Spleen (tissue), 13 donors: ENCODE measurements at regions of chr1 and their contacts with region 1.

Region 1: DNA sequence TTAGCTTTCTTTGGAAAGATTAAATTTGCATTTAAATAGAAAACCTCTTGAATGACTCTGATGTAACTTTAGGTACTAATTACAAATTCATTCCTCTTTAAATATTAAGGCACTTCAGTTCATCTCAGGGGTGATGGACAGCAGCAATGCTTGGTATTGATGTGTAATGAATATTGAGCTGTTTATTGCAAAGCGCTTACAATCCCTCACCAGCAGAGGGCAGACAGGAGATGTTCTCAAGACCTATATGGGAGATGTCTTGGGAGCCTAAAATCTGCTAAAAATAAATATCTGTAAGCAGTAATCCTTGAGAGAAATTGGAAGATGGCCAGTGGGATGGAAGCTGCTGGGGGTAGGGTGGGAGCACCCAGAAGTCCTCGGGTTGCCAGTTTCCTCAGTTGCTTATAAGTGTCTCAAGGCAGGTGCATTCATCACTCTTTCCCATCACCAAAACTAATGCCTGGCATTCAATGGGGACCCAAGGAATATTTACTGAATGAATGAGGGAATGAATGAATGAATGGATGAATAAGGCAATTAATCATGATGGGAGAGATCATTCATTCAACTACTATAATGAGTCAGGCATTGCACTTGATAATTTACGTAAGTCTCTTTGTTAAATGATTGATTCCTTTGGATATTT is 2.3 kb downstream of the KLHDC8A start:
- DNase-seq: no peak
- H3K4me3 ChIP-seq: no peak overlapping the region
- H3K27ac ChIP-seq: no peak overlapping the region
- H3K4me1 ChIP-seq: peaks cover 0 to 24% (median 12%) of the 10 kb centered on the region in 6 donors
- H3K27me3 ChIP-seq: peaks cover 0 to 26% (median 0%) of the 10 kb centered on the region in 7 donors
- CTCF ChIP-seq: peak; percentile 51 to 83 (median 73)
- POLR2A ChIP-seq: no peak

Region 2: GRCh38 chr1:205144751-205145150 is 209.6 kb before region 1 on chr1:
- intact Hi-C with region 1: no loop called
- DNase-seq: no peak
- H3K4me3 ChIP-seq: no peak overlapping the region
- H3K27ac ChIP-seq: peak overlapping the region in 4 of 8 donors; percentile 12 to 39 (median 30)
- H3K4me1 ChIP-seq: peaks cover 7 to 33% (median 13%) of the 10 kb centered on the region in 6 donors
- H3K27me3 ChIP-seq: no peaks in the 10 kb centered on the region
- CTCF ChIP-seq: no peak
- POLR2A ChIP-seq: no peak

Region 3: GRCh38 chr1:205485338-205486228 is 131.2 kb after region 1 on chr1:
- intact Hi-C with region 1: loop called (anchors 5 kb)
- DNase-seq: peak; percentile 88
- H3K4me3 ChIP-seq: no peak overlapping the region
- H3K27ac ChIP-seq: no peak overlapping the region
- H3K4me1 ChIP-seq: peaks cover 2 to 27% (median 21%) of the 10 kb centered on the region in 6 donors
- H3K27me3 ChIP-seq: peaks cover 0 to 75% (median 16%) of the 10 kb centered on the region in 7 donors
- CTCF ChIP-seq: peak; percentile 82 to 99 (median 96)
- POLR2A ChIP-seq: no peak